WTC11 (cell line): ENCODE measurements at regions of chr2 and their contacts with region 1.

Region 1: DNA sequence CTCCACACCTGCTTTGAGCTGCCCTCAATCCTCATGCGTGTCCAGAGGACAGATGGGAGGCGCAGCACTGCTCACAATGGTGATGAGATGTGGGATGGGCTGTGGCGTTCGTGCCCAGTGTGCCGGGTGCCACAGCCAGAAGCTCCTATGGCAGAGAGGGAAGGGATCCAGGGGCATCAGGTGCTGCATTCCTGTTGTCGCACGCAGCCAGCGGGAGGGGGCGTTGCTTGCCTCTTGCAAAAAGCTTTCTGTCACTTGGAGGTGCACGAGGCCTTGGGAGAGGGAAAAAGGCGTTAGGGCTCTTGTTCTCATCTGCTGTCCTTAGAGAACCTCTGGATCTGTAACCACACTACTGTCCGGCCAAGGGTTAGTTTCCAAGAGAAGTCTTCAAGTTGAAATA is 29.2 kb upstream of the ALLC start:
- DNase-seq: peak; percentile 74
- ATAC-seq: peak; percentile 90
- H3K4me3 Mint-ChIP-seq: no peak overlapping the region
- H3K27ac Mint-ChIP-seq: no peak overlapping the region
- H3K4me1 Mint-ChIP-seq: peaks cover 9% of the 10 kb centered on the region; the same call in 1 of the 2 replicates
- H3K27me3 Mint-ChIP-seq: no peaks in the 10 kb centered on the region
- CTCF ChIP-seq: no peak

Region 2: DNA sequence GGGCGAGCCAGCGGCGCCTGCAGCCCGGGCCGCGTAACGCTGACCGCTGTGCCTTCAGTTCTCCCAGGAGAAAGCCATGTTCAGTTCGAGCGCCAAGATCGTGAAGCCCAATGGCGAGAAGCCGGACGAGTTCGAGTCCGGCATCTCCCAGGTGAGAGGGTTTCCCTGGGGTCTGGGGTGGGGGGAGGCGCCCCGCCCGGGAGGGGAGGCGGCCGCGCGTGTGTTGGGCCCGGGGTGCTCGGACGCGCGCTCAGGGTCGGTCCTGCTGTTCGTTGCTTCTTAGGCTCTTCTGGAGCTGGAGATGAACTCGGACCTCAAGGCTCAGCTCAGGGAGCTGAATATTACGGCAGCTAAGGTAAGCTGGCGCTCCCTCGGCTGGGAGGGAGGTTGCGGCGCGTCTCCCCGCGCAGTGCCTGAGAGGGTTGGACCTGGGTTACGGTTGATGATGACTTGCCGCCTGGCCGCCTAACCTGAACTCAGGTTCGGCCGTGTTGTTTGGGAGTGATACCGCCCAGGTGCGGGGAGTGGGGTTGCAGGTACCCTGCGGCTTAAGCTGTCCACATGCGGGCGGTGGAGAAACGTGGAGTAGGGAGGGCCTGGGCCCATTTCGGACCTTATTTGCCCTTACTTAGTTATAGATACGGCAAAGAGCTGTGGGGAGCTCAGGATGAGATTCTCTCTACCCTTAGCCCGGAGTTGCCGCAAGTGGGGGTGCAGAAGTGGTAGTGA is 53.1 kb before region 1 on chr2:
- CTCF ChIA-PET with region 1: no interaction called
- POLR2A ChIA-PET with region 1: no interaction called
- DNase-seq: no peak
- ATAC-seq: no peak
- H3K4me3 Mint-ChIP-seq: peak overlapping the region; percentile 98
- H3K27ac Mint-ChIP-seq: peak overlapping the region; percentile 97
- H3K4me1 Mint-ChIP-seq: peaks cover 32% of the 10 kb centered on the region
- H3K27me3 Mint-ChIP-seq: no peaks in the 10 kb centered on the region
- CTCF ChIP-seq: no peak

Region 3: GRCh38 chr2:3641841-3642421 is 13.1 kb after region 1 on chr2:
- CTCF ChIA-PET with region 1: interaction called, 14 read pairs
- POLR2A ChIA-PET with region 1: no interaction called
- DNase-seq: no peak
- ATAC-seq: no peak
- H3K4me3 Mint-ChIP-seq: no peak overlapping the region
- H3K27ac Mint-ChIP-seq: no peak overlapping the region; the same call in 1 of the 2 replicates
- H3K4me1 Mint-ChIP-seq: no peaks in the 10 kb centered on the region
- H3K27me3 Mint-ChIP-seq: no peaks in the 10 kb centered on the region
- CTCF ChIP-seq: no peak

Region 4: GRCh38 chr2:3651691-3652648 is 23.2 kb after region 1 on chr2:
- CTCF ChIA-PET with region 1: interaction called, 15 read pairs
- POLR2A ChIA-PET with region 1: no interaction called
- DNase-seq: peak; percentile 80
- ATAC-seq: peak; percentile 67
- H3K4me3 Mint-ChIP-seq: peak overlapping the region; percentile 72
- H3K27ac Mint-ChIP-seq: peak overlapping the region; percentile 85; the same call in 1 of the 2 replicates
- H3K4me1 Mint-ChIP-seq: peaks cover 15% of the 10 kb centered on the region
- H3K27me3 Mint-ChIP-seq: peaks cover 13% of the 10 kb centered on the region
- CTCF ChIP-seq: no peak

Region 5: GRCh38 chr2:3827673-3828575 is 199.1 kb after region 1 on chr2:
- CTCF ChIA-PET with region 1: no interaction called
- POLR2A ChIA-PET with region 1: no interaction called
- DNase-seq: no peak
- ATAC-seq: no peak
- H3K4me3 Mint-ChIP-seq: no peak overlapping the region
- H3K27ac Mint-ChIP-seq: no peak overlapping the region
- H3K4me1 Mint-ChIP-seq: no peaks in the 10 kb centered on the region
- H3K27me3 Mint-ChIP-seq: peaks cover 17% of the 10 kb centered on the region
- CTCF ChIP-seq: no peak

Region 6: DNA sequence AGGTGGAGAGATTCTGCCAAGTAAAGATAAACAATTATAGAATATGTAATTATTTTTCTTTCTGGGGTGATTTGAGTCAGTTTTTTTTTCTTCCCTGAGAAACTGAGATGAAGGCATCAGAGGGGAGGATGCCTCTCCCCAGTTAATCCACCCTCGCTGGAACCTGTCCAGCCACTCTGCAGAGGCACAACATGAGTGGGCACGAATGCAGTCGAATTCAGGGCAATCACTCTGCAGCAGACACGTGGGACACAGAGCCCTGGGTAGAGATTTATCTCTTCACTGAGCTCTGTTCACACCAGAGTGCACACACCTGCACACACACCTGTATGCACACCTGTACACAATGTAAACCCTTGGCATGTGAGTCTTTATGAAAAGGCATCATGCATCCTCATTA is 228.8 kb after region 1 on chr2:
- CTCF ChIA-PET with region 1: no interaction called
- POLR2A ChIA-PET with region 1: no interaction called
- DNase-seq: no peak
- ATAC-seq: no peak
- H3K4me3 Mint-ChIP-seq: no peak overlapping the region
- H3K27ac Mint-ChIP-seq: no peak overlapping the region
- H3K4me1 Mint-ChIP-seq: no peaks in the 10 kb centered on the region
- H3K27me3 Mint-ChIP-seq: peaks cover 2% of the 10 kb centered on the region; the same call in 1 of the 2 replicates
- CTCF ChIP-seq: no peak